ENCODE measurements at regions of chr22 and their contacts with region 1.

Region 1: GRCh38 chr22:30634471-30635233 is 929 bp upstream of the SLC35E4 start:
- DNase-seq: peak; percentile 83 to 91 (median 89)
- H3K4me3 ChIP-seq: peak overlapping the region; percentile 81
- H3K27ac ChIP-seq: peak overlapping the region; percentile 83 to 94
- H3K4me1 ChIP-seq: peaks cover 15% of the 10 kb centered on the region
- H3K27me3 ChIP-seq: no peaks in the 10 kb centered on the region
- CTCF ChIP-seq: peak; percentile 89 to 97 (median 95)
- EP300 ChIP-seq: no peak
- POLR2A ChIP-seq: no peak

Region 2: DNA sequence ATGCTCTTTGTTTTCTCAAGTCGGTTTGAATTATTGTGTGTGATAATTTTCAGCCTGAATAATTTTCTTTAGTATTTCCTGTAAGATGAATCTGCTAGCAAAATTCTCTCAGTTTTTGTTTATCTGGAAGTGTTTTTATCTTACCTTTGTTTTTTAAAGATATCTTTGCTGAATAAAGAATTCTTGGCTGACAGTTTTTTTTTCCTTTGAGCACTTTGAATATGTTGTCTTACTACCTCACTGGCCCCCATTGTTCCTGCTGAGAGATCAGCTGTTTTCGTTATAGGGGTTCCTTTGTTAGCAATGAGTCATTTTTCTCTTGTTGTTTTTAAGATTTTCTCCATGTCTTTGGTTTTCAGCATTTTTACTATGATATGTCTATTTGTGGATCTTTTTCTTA is 491.4 kb before region 1 on chr22:
- intact Hi-C with region 1: no loop called
- DNase-seq: no peak
- H3K4me3 ChIP-seq: no peak overlapping the region
- H3K27ac ChIP-seq: no peak overlapping the region
- H3K4me1 ChIP-seq: no peaks in the 10 kb centered on the region
- H3K27me3 ChIP-seq: no peaks in the 10 kb centered on the region
- CTCF ChIP-seq: no peak
- EP300 ChIP-seq: no peak
- POLR2A ChIP-seq: no peak

Region 3: GRCh38 chr22:30574997-30575671 is 59.5 kb before region 1 on chr22:
- intact Hi-C with region 1: no loop called
- DNase-seq: peak in 4 of 5 donors; percentile 38 to 74 (median 42)
- H3K4me3 ChIP-seq: no peak overlapping the region
- H3K27ac ChIP-seq: no peak overlapping the region
- H3K4me1 ChIP-seq: peaks cover 14% of the 10 kb centered on the region
- H3K27me3 ChIP-seq: no peaks in the 10 kb centered on the region
- CTCF ChIP-seq: peak in 1 of 3 donors; percentile 13
- EP300 ChIP-seq: no peak
- POLR2A ChIP-seq: no peak

Region 4: DNA sequence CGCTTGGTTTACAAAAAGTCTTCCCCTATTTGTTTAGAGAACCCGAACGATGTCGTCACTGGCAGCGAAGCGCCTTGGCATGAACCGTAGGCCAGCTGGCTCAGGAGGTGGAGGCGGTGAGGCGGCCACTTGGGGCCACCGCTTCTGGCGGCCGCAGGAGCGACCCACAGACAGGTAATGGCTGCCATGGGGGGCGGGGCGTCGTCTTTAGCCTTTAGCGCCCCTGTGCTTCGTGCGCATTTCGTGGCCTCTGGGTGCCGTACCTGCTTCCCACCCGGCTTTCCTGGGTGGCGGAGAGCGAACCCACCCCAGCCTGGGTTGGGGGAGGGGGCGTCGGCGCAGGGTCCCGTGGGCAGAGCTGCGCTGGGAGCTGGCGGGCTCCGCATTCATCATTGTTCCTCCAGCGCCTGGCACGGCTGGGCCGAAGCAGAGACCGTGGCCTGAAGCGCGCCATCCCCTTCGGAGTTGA is 59.6 kb after region 1 on chr22:
- intact Hi-C with region 1: loop called in 1 of 4 experiments (anchors 10 kb)
- DNase-seq: peak; percentile 37 to 66 (median 55)
- H3K4me3 ChIP-seq: peak overlapping the region; percentile 41
- H3K27ac ChIP-seq: no peak overlapping the region
- H3K4me1 ChIP-seq: peaks cover 13% of the 10 kb centered on the region
- H3K27me3 ChIP-seq: no peaks in the 10 kb centered on the region
- CTCF ChIP-seq: no peak
- EP300 ChIP-seq: no peak
- POLR2A ChIP-seq: no peak

Region 5: DNA sequence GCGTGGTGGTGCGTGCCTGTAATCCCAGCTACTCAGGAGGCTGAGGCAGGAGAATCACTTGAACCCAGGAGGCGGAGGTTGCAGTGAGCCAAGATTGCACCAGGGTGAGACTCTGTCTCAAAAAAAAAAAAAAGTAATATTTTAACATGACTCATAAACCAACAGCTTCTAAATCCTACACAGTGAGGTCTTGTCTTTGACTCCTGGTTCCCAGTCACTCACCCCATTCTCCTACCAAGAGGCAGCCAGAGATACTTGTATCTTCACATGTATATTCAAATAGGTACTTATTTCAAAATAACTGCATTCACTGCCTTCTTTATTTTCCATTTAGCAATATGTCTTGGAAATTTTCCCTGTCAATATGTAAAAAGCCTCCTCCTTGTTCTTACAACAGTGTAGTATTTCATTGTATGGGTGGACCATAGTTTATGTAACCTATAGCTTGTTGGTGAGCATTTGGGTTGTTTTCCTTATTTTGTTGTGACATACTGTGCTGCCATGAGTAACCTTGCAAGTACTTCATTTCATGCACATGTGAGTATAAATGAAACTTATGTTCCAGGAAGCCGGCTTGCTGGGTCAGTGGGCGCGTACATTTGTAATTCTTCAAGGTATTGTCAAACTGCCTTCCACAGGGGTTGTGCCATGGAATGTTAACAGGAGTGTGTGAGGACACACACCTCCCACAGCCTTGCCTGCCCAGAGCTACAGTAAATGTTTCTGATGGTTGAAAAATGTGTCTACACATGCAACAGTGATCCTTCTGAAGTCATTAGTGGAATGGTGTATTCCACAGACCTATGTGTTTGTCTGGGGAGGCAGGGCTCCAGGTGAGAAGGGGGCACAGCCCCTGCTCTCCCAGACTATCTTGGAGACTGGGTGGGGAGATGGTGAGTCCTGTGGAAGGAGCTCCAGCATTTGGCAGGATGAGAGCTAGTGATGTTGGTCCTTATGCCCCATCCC is 107.9 kb after region 1 on chr22:
- intact Hi-C with region 1: no loop called
- DNase-seq: no peak
- H3K4me3 ChIP-seq: no peak overlapping the region
- H3K27ac ChIP-seq: no peak overlapping the region
- H3K4me1 ChIP-seq: no peaks in the 10 kb centered on the region
- H3K27me3 ChIP-seq: no peaks in the 10 kb centered on the region
- CTCF ChIP-seq: no peak
- EP300 ChIP-seq: no peak
- POLR2A ChIP-seq: no peak

Region 6: GRCh38 chr22:30754971-30755756 is 120.5 kb after region 1 on chr22:
- intact Hi-C with region 1: loop called in 2 of 4 experiments (anchors 10 kb)
- DNase-seq: peak in 4 of 5 donors; percentile 19 to 48 (median 32)
- H3K4me3 ChIP-seq: no peak overlapping the region
- H3K27ac ChIP-seq: no peak overlapping the region
- H3K4me1 ChIP-seq: no peaks in the 10 kb centered on the region
- H3K27me3 ChIP-seq: no peaks in the 10 kb centered on the region
- CTCF ChIP-seq: peak in 1 of 3 donors; percentile 19
- EP300 ChIP-seq: no peak
- POLR2A ChIP-seq: no peak

Region 7: DNA sequence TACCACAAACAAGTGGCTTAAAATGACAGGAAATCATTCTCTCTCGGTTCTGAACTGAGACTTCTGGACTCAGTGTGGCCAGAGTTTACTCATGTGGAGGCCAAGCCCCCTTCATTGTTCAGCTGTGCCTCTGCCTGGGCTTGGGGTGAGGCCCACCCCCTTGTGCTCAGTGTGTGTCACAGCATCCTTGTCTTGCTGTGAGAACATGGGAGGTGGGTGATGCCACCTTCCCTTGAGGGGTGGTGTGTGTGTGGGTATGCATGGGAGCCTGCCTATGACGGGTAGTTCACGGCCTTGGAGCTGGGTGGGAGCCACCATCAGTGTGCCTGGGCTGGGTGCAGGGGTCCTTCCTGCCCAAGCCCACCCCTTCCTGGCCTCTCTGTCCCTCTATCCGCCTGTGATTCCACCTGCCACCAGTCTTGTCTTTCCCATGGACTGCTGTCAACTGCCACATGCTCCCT is 232.2 kb after region 1 on chr22:
- intact Hi-C with region 1: no loop called
- DNase-seq: peak in 2 of 5 donors; percentile 6 to 15
- H3K4me3 ChIP-seq: no peak overlapping the region
- H3K27ac ChIP-seq: no peak overlapping the region
- H3K4me1 ChIP-seq: no peaks in the 10 kb centered on the region
- H3K27me3 ChIP-seq: no peaks in the 10 kb centered on the region
- CTCF ChIP-seq: no peak
- EP300 ChIP-seq: no peak
- POLR2A ChIP-seq: no peak

Region 8: GRCh38 chr22:30920407-30920806 is 285.8 kb after region 1 on chr22:
- intact Hi-C with region 1: loop called in 3 of 4 experiments (anchors 10 kb)
- DNase-seq: peak; percentile 76 to 89 (median 86)
- H3K4me3 ChIP-seq: no peak overlapping the region
- H3K27ac ChIP-seq: no peak overlapping the region
- H3K4me1 ChIP-seq: no peaks in the 10 kb centered on the region
- H3K27me3 ChIP-seq: no peaks in the 10 kb centered on the region
- CTCF ChIP-seq: peak; percentile 69 to 90 (median 72)
- EP300 ChIP-seq: no peak
- POLR2A ChIP-seq: no peak

Region 9: DNA sequence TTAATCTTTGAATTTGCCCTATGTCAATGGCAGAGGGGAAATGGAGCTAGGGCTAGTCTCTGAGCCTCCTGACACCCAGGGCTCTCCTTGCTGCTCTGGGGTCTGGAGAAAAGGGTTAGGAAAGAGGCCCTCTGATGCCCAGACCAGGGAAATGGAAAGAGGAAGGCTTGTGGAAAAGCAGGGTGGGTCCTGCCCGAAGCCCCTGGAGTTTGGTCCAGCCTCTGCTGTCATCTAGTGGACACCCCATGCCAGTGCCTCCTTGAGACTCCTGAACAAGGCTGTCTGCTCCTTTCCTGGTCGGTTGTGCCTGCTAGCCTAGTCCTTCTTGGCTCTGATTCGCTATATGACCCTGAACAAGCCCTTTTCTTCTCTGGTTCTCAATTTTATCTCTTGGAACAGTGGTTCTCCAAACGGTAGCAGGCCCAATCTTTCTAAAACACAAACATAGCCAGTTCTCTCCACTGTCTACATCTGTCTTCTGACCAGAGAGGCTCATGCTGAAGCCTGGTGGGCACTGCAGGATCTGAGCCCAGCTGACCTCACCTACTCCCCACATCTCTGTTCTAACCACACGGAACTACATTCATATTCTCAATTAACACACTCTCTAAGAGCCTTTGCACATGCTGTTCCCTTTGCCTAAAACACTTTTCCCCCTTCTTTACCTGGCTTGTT is 514.4 kb after region 1 on chr22:
- intact Hi-C with region 1: loop called in 1 of 4 experiments (anchors 10 kb)
- DNase-seq: peak; percentile 70 to 77 (median 72)
- H3K4me3 ChIP-seq: no peak overlapping the region
- H3K27ac ChIP-seq: no peak overlapping the region
- H3K4me1 ChIP-seq: no peaks in the 10 kb centered on the region
- H3K27me3 ChIP-seq: no peaks in the 10 kb centered on the region
- CTCF ChIP-seq: peak; percentile 61 to 84 (median 62)
- EP300 ChIP-seq: no peak
- POLR2A ChIP-seq: no peak

Measured in ovary (tissue), 10 donors.